ENCODE measurements at regions of chr2 and their contacts with region 1.

Region 1: DNA sequence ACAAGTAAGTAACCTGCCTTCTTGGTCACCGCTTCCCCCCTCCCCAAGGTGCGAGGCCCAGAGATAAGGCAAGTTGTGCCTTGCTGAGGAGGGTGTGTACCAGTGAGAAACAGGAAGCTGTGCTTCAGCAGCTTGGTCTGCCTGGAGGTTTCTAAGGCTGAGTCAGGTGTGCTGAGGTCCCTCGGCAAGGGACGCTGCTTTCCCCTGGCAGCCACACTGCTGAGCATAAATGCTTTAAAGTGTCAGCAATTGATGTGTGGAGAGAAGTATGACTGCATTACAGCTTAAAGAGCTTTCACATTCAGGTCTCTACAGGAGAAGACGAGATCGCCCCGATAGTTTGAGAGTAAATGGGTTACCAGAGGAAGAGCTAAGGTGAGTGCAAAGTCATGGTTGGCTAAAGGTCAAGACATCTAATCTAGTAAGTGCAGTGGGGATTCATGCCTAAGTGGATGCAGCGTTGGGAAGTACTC is 86.9 kb downstream of the LIMS1 start:
- H3K4me3 Mint-ChIP-seq: peak overlapping the region; percentile 71
- H3K27ac Mint-ChIP-seq: peak overlapping the region; percentile 91
- H3K4me1 Mint-ChIP-seq: peaks cover 63% of the 10 kb centered on the region
- H3K27me3 Mint-ChIP-seq: no peaks in the 10 kb centered on the region

Region 2: DNA sequence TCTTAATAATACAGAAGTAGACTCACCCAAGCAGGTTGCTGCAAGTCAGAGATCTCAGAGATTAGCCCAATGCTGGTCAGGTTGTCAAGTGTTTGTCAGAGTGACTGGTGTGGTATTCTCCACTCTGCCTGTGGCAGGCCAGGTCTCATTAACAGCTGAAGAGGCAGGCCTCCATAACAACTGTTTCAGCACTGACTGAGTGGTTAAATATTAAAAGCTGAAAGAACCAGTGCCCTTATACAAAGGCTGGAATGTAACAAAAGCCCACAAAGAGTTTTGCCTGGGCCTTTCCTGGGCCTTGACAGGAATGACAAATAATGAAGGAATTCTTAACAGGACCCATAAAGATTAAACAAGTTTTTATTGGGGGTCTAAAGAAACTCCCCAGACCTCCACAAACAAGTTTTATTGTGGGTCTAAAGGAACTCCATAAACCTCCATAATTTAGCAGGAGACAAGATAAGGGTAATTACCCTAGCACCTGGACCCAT is 305.6 kb before region 1 on chr2:
- intact Hi-C with region 1: no loop called
- H3K4me3 Mint-ChIP-seq: no peak overlapping the region
- H3K27ac Mint-ChIP-seq: no peak overlapping the region
- H3K4me1 Mint-ChIP-seq: no peaks in the 10 kb centered on the region
- H3K27me3 Mint-ChIP-seq: no peaks in the 10 kb centered on the region

Region 3: DNA sequence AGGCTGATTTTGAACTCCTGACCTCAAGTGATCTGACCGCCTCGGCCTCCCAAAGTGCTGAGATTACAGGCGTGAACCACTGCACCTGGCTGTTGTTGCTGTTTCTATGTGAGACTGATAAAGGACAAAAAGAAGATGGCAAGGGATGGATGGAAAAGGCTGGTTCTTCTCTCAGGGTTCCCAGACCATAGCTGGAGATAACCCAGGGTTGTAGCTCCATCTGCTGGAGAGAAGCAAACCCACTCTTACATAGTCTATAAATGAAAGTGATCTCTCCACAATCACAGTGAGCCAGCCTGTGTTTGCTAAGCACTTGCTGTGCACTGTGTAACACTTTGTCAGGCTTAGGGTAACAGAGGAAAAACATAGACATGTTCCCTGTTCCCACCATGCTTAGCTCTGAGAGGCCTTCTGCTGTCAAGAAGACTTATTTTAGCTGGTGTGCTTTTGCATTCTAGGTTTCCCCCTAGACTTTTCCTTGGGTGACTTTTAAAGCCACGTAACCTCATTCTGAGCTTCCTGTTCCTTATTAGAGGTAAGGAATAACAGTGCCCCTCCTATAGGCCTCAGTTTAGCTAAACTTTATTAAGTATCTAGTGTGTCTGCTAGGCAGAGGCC is 37.1 kb before region 1 on chr2:
- intact Hi-C with region 1: no loop called
- H3K4me3 Mint-ChIP-seq: no peak overlapping the region
- H3K27ac Mint-ChIP-seq: peak overlapping the region; percentile 68
- H3K4me1 Mint-ChIP-seq: peaks cover 60% of the 10 kb centered on the region
- H3K27me3 Mint-ChIP-seq: no peaks in the 10 kb centered on the region

Region 4: DNA sequence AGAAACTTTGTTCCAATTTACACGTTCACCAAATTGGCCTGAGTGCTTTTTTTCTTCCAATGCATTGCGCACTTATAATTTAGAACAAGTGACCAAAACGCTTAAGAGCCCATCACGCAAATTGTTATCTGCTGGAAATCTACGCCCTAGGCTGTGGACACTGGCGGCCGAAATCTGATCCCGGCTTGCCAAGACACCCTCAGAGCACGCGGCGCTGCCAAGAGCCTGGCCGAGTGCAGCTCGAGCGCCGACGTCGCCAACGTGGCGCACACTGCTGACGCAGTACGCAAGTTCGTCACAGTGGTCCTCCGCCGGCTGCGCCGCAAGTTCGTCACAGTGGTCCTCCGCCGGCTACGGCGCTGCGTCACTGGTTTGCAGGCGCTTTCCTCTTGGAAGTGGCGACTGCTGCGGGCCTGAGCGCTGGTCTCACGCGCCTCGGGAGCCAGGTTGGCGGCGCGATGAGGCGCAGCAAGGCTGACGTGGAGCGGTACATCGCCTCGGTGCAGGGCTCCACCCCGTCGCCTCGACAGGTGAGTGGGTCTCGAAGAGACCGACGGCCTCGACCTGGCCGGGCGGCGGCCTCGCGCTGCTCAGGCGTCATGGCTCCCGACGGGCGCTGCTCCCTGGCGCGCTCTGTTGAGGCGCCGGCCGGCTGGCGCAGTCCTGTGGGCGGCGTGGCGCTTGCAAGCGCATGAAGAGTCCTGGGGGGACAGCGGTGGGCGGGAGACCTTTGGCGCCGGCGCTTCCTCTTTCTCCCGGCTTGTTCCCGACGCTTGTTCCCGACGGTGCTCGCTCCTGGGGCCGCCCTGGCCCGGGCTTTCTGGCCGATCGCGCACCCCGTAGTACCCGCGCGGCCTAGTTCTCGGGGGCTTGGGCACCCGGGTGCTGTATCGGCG is 98.3 kb after region 1 on chr2 and contains the start of gene RANBP2:
- intact Hi-C with region 1: loop called (anchors 10 kb)
- H3K4me3 Mint-ChIP-seq: peak within 1 kb of the TSS; percentile 84
- H3K27ac Mint-ChIP-seq: peak within 1 kb of the TSS; percentile 98
- H3K4me1 Mint-ChIP-seq: peaks cover 29% of the 10 kb centered on the region
- H3K27me3 Mint-ChIP-seq: no peaks in the 10 kb centered on the region

Measured in dendritic cell treated with granulocyte-macrophage colony-stimulating factor and Interleukin-4, amounts not matched to agents 40 ng/mL and 50 ng/mL, for 4 days (primary cell).